SK-N-SH (cell line): ENCODE measurements at regions of chr15 and their contacts with region 1.

Region 1: GRCh38 chr15:67433495-67434099 is 87.3 kb upstream of the C15orf61 start:
- DNase-seq: peak; percentile 63
- H3K4me3 ChIP-seq: no peak overlapping the region; a peak in 1 of 4 replicates
- H3K27ac ChIP-seq: no peak overlapping the region
- H3K4me1 ChIP-seq: no peaks in the 10 kb centered on the region
- H3K27me3 ChIP-seq: no peaks in the 10 kb centered on the region
- CTCF ChIP-seq: peak; percentile 74
- EP300 ChIP-seq: no peak
- RAD21 ChIP-seq: peak; percentile 80

Region 2: DNA sequence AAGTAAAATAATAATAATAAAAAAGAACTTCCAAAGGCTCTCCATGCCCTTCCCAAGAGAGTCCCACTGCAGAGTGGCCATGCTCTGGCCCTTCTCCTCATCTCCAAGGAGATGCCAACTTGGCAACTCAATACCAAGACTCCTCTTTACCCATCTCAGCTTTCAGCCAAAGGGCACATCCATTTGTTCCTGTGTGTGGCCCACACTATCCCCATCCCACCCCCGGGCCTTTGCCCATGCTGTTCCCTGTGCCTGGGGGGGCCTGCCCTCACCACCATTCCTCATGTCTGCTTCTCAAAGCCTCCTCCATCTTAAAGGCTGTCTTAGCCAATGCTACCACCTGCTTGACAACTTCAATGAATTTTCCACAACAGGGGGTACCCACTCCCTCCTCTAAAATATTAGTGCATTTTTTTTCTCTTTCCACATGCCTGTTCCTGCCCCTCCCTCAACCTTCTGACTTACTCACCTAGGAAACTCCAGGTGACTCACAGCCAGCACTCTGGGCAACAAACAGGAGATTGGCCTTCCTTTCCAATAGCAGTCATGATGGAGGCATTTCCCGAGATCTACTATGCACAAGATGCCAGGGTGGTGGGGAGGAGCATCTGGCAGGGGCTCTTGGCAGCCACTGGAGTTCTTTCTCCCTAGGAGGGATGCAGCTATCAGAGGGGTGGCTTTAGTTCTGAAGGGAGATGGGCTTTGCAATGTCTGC is 477.6 kb before region 1 on chr15:
- CTCF ChIA-PET with region 1: interaction called, 14 read pairs
- POLR2A ChIA-PET with region 1: no interaction called
- DNase-seq: no peak
- H3K4me3 ChIP-seq: no peak overlapping the region
- H3K27ac ChIP-seq: no peak overlapping the region
- H3K4me1 ChIP-seq: no peaks in the 10 kb centered on the region
- H3K27me3 ChIP-seq: no peaks in the 10 kb centered on the region
- CTCF ChIP-seq: no peak
- EP300 ChIP-seq: peak in 1 of 2 experiments; percentile 69; a peak in 2 of 4 replicates
- RAD21 ChIP-seq: no peak

Region 3: DNA sequence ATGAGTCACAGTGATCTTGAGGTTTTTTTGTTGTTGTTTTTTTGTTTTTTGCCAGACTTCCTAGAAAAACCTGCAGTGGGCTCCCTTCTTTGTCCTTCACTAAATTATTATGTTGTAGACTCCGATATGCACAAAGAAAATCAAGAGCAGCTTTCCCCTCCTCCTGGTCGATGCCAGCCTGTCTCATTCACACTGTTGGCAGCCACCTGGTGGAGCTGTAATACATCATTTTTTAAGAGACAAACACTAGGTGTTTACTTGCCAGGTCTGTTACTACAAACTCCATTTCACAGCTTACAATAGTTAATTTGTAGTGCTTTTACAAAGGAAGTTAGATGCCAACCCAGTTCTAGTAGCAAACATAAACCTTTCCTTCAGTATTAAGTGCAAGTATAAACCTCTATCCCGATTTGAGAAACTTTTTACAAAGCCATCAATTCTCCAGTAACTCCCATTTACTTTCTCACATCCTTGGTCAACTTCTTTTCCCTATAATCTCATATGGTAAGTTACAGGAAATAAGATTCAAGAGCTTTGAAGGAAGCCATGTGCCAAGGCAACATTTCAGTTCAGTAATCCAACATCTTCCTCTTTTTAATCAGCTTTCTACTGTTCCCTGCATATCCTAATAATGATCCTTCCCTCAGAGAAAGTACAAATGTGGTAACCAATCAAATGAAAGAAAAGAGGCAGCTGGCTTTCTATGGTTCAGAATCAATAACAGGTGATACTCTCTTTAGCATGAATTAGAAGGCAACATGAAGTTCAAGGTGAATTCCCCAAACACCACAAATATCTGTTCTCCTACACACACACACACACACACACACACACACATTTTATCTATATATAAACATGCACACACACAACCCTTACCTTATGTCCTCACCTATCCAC is 193.1 kb before region 1 on chr15:
- CTCF ChIA-PET with region 1: interaction called, 21 read pairs
- POLR2A ChIA-PET with region 1: no interaction called
- DNase-seq: peak; percentile 57
- H3K4me3 ChIP-seq: no peak overlapping the region
- H3K27ac ChIP-seq: 0 out of 4 replicates have a peak overlapping the region, but pooled peaks of 1 of the 2 experiments have one; percentile 6
- H3K4me1 ChIP-seq: peaks cover 7 to 13% of the 10 kb centered on the region in 2 experiments; a peak in 3 of 4 replicates
- H3K27me3 ChIP-seq: no peaks in the 10 kb centered on the region
- CTCF ChIP-seq: peak; percentile 51
- EP300 ChIP-seq: no peak
- RAD21 ChIP-seq: peak; percentile 67

Region 4: GRCh38 chr15:67413770-67414394 is 19.7 kb before region 1 on chr15:
- CTCF ChIA-PET with region 1: interaction called, 14 read pairs
- POLR2A ChIA-PET with region 1: no interaction called
- DNase-seq: no peak
- H3K4me3 ChIP-seq: no peak overlapping the region
- H3K27ac ChIP-seq: no peak overlapping the region
- H3K4me1 ChIP-seq: no peaks in the 10 kb centered on the region; a peak in 1 of 4 replicates
- H3K27me3 ChIP-seq: no peaks in the 10 kb centered on the region
- CTCF ChIP-seq: no peak
- EP300 ChIP-seq: no peak
- RAD21 ChIP-seq: no peak

Region 5: GRCh38 chr15:67422296-67422695 is 11.3 kb before region 1 on chr15:
- CTCF ChIA-PET with region 1: interaction called, 11 read pairs
- POLR2A ChIA-PET with region 1: no interaction called
- DNase-seq: no peak
- H3K4me3 ChIP-seq: no peak overlapping the region
- H3K27ac ChIP-seq: no peak overlapping the region
- H3K4me1 ChIP-seq: no peaks in the 10 kb centered on the region
- H3K27me3 ChIP-seq: no peaks in the 10 kb centered on the region
- CTCF ChIP-seq: no peak
- EP300 ChIP-seq: no peak
- RAD21 ChIP-seq: peak; percentile 23; the same call in 1 of the 2 replicates

Region 6: GRCh38 chr15:67444100-67444499 is 10.5 kb after region 1 on chr15:
- CTCF ChIA-PET with region 1: interaction called, 13 read pairs
- POLR2A ChIA-PET with region 1: no interaction called
- DNase-seq: no peak
- H3K4me3 ChIP-seq: no peak overlapping the region
- H3K27ac ChIP-seq: no peak overlapping the region
- H3K4me1 ChIP-seq: no peaks in the 10 kb centered on the region; a peak in 1 of 4 replicates
- H3K27me3 ChIP-seq: no peaks in the 10 kb centered on the region
- CTCF ChIP-seq: no peak
- EP300 ChIP-seq: no peak
- RAD21 ChIP-seq: no peak